IMR-90 (cell line): ENCODE measurements at regions of chr20 and their contacts with region 1.

Region 1: DNA sequence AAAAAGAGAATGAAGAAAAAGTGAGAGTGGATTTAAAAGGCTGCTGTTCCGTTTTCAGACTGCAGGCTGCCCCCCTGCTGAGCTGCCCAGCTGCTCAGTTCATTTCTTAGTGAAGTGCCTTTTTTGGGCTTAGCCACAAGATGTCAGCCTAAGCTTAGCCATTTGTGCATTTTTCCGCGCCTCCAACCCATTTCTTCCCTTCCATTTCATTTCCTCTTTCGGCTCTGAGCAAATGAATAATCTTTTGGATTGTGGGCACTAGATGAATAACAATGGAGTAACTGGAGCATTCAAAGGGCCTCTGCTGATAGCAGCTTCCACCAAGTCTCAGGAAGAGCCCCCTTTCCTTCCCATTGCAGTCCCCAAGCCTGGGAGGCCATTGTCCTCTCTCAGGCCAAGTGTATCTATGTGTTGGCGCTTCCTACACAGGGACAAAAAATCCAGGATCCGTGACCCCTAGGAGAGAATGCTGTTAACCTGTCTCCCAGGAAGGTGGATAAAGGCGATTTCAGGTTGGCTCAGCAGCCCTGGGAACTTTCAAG is 83.5 kb upstream of the SPTLC3 start:
- DNase-seq: peak; percentile 85
- ATAC-seq: peak; percentile 81
- H3K4me3 ChIP-seq: no peak overlapping the region
- H3K27ac ChIP-seq: no peak overlapping the region
- H3K4me1 ChIP-seq: peaks cover 17% of the 10 kb centered on the region
- H3K27me3 ChIP-seq: peaks cover 2% of the 10 kb centered on the region; the same call in 1 of the 2 replicates
- CTCF ChIP-seq: peak; percentile 100
- POLR2A ChIP-seq: peak; percentile 47
- RAD21 ChIP-seq: peak; percentile 98

Region 2: DNA sequence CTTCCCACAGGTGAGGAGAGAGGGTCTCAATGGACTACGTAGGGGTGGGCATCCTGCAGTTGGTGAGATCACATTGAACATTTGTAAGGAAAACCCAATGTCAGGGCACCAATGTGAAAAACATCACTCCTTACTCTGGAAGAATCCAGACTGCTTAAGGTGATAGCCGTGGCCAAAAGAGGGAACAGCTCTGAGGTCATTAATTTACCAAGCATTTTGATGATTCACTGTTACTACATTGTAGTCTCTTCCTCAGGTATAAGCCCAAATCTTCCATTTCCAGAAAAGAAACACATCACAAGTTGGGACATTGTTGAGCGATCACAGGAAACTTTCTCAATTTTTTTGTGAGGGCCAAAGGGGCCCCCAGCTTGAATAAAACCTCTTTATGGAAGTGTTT is 22.4 kb after region 1 on chr20:
- CTCF ChIA-PET with region 1: no interaction called
- POLR2A ChIA-PET with region 1: no interaction called
- dilution Hi-C with region 1: no loop called
- in situ Hi-C with region 1: no loop called
- intact Hi-C with region 1: loop called (anchors 1 kb)
- DNase-seq: no peak
- ATAC-seq: no peak
- H3K4me3 ChIP-seq: no peak overlapping the region
- H3K27ac ChIP-seq: peak overlapping the region; percentile 56; the same call in 1 of the 2 replicates
- H3K4me1 ChIP-seq: peaks cover 19% of the 10 kb centered on the region
- H3K27me3 ChIP-seq: no peaks in the 10 kb centered on the region
- CTCF ChIP-seq: no peak
- POLR2A ChIP-seq: no peak
- RAD21 ChIP-seq: no peak

Region 3: GRCh38 chr20:13105864-13106457 is 180.7 kb after region 1 on chr20:
- CTCF ChIA-PET with region 1: interaction called, 3 read pairs
- POLR2A ChIA-PET with region 1: no interaction called
- dilution Hi-C with region 1: no loop called
- in situ Hi-C with region 1: loop called (anchors 5 kb)
- intact Hi-C with region 1: loop called (anchors 1 kb)
- DNase-seq: peak; percentile 38
- ATAC-seq: peak; percentile 33; the same call in 1 of the 2 replicates
- H3K4me3 ChIP-seq: no peak overlapping the region
- H3K27ac ChIP-seq: no peak overlapping the region
- H3K4me1 ChIP-seq: no peaks in the 10 kb centered on the region; the same call in 1 of the 2 replicates
- H3K27me3 ChIP-seq: peaks cover 2% of the 10 kb centered on the region; the same call in 1 of the 2 replicates
- CTCF ChIP-seq: peak; percentile 84
- POLR2A ChIP-seq: no peak
- RAD21 ChIP-seq: peak; percentile 77

Region 4: DNA sequence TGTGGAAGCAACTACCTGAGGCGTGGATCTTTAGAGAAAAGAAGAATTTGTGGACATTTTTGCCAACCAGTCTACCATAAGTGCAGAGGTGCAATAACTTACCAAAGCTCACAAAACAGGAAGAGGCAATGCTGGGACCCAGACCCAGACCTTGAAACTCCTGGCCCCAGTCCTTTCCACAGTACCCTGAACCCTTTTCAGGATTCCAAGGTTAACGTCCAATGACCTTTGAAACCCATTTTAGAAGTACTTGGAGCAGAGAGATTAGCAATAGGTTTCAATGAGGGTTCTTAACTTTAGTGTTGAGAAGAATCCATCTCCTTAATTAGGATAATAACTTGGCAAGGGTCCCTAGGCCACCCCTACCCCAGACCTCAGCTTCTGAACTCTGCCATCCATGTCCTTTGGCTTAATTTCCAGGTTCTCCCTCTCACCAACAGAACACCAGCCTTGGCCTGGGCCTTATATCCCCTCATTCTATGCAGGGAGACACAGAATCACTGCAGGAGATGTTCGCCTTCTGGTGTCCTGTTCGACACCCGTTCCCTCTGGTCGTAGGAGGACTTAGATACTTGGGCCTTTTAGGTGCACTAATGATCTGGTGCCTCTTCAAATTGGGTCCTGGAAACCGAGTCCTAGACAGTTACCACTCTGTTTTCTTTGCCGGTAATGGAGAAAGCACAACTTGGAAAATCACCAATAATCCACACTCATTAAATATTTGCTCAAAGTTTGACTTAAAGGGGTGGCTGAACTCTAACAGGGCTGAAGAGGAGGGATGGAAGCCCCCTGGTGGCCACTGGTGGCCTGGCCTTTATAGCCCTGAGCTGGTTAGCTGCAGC is 336.4 kb after region 1 on chr20:
- CTCF ChIA-PET with region 1: no interaction called
- POLR2A ChIA-PET with region 1: no interaction called
- dilution Hi-C with region 1: no loop called
- in situ Hi-C with region 1: no loop called
- intact Hi-C with region 1: loop called (anchors 5 kb)
- DNase-seq: peak; percentile 21
- ATAC-seq: peak; percentile 87
- H3K4me3 ChIP-seq: no peak overlapping the region
- H3K27ac ChIP-seq: no peak overlapping the region
- H3K4me1 ChIP-seq: no peaks in the 10 kb centered on the region
- H3K27me3 ChIP-seq: no peaks in the 10 kb centered on the region; the same call in 1 of the 2 replicates
- CTCF ChIP-seq: peak; percentile 54
- POLR2A ChIP-seq: no peak
- RAD21 ChIP-seq: peak; percentile 27; the same call in 1 of the 2 replicates